Cardiac septum (tissue), 1 donor: ENCODE measurements at regions of chr7 and their contacts with region 1.

Region 1: GRCh38 chr7:137592232-137592896 is 248.8 kb upstream of the PTN start:
- DNase-seq: no peak

Region 2: DNA sequence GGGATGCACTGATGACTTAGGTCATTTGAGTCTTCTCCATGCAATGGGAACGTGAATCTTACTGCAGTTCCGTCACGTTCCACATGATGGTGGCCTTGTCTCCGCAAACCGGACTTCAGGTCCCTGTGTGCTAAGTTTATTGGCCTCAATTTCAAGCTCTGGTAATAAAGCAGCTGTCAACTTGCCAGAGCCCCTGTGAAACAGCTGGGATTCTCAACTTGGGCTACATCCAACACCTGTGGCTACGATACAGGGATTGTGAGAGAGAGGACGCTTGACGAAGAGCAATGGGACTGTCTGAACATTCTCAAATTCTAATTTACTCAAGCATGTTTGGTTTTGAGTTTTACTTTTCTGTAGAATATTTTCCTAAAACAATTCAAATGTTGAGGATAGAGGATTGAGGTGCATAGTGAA is 423.1 kb before region 1 on chr7:
- intact Hi-C with region 1: loop called (anchors 10 kb)
- DNase-seq: no peak

Region 3: DNA sequence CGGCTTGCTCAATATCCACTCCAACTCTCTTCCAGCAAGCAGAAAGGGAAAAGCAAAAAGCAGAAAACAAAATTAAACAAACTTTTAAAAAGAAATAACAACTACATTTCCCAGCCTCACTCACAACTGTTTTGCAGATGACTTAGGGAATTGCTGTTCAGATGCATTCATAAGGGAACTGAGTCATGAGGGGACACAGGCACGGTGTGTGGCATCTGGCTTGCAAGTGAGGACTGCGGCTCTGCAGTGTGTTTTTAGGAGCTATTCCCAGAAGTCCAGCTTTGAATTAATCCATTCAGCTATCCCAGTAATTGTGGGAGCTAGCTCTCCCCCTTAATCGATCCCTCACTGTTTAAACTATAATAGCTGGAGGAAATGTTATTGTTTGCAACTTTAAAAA is 279.2 kb before region 1 on chr7:
- intact Hi-C with region 1: no loop called
- DNase-seq: no peak